Caco-2 (cell line): ENCODE measurements at regions of chr1 and their contacts with region 1.

Region 1: GRCh38 chr1:148334339-148335130 is 148.6 kb downstream of the PPIAL4G start:
- DNase-seq: peak; percentile 89 to 95
- H3K4me3 ChIP-seq: peak overlapping the region; percentile 57
- H3K4me3 Mint-ChIP-seq: peak overlapping the region; percentile 84
- H3K27ac Mint-ChIP-seq: peak overlapping the region; percentile 100
- H3K4me1 ChIP-seq: peaks cover 4% of the 10 kb centered on the region; the same call in 1 of the 2 replicates
- H3K4me1 Mint-ChIP-seq: peaks cover 8% of the 10 kb centered on the region
- H3K27me3 ChIP-seq: no peaks in the 10 kb centered on the region
- H3K27me3 Mint-ChIP-seq: peaks cover 3% of the 10 kb centered on the region
- CTCF ChIP-seq: no peak

Region 2: DNA sequence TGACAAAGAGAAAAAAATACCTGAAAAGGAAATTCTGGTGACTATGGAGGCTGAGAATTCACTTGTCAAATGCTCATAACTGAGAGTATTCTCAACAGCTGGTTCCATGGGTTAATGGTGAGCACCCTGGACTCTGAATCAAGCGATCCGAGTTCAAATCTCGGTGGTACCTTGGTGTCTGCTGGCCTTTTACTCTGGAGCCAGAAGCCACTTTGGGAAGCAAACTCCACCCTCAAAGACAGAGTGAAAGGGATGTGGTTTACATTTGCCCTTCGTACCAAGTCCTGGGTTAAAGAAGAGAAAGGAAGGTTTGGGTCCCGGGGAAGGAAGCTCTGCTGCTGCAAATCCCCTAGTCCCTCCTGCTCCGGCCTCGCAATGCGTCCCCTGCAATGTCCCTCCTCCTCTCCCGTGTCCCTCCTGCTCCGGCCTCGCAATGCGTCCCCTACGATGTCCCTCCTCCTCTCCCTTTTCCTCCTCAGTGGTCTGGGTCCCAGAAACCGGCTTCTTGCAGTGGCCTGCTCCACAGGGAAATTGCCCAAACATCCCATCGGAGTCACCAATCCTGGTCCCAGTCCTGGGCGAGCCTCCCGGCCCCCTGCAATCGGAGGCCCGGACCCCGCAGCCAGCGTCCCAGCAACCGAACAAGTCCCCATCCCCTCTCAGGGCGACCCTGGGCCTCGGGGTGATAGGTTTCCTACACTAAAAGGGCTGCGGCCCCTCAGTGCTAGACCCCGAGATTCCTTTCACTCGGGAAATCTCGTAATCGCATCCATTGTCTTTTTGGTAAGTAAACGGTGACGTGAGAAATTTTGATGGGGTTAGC is 19.1 kb after region 1 on chr1:
- CTCF ChIA-PET with region 1: no interaction called
- POLR2A ChIA-PET with region 1: no interaction called
- intact Hi-C with region 1: no loop called
- DNase-seq: no peak
- H3K4me3 ChIP-seq: no peak overlapping the region
- H3K4me3 Mint-ChIP-seq: no peak overlapping the region
- H3K27ac Mint-ChIP-seq: no peak overlapping the region
- H3K4me1 ChIP-seq: no peaks in the 10 kb centered on the region
- H3K4me1 Mint-ChIP-seq: no peaks in the 10 kb centered on the region
- H3K27me3 ChIP-seq: no peaks in the 10 kb centered on the region
- H3K27me3 Mint-ChIP-seq: peaks cover 11% of the 10 kb centered on the region
- CTCF ChIP-seq: no peak

Region 3: GRCh38 chr1:148388260-148389027 is 53.9 kb after region 1 on chr1:
- CTCF ChIA-PET with region 1: no interaction called
- POLR2A ChIA-PET with region 1: interaction called, 10 read pairs
- intact Hi-C with region 1: no loop called
- DNase-seq: peak; percentile 94 to 97
- H3K4me3 ChIP-seq: peak overlapping the region; percentile 62
- H3K4me3 Mint-ChIP-seq: peak overlapping the region; percentile 94
- H3K27ac Mint-ChIP-seq: peak overlapping the region; percentile 100
- H3K4me1 ChIP-seq: 0 out of 2 replicates have a peak, but pooled peaks cover 4% of the 10 kb centered on the region
- H3K4me1 Mint-ChIP-seq: no peaks in the 10 kb centered on the region
- H3K27me3 ChIP-seq: no peaks in the 10 kb centered on the region
- H3K27me3 Mint-ChIP-seq: no peaks in the 10 kb centered on the region
- CTCF ChIP-seq: no peak